Activated CD4-positive, alpha-beta T cell treated with anti-CD3 and anti-CD28 coated beads, Interleukin-2, amount 10 ng/mL, durations not matched to agents 24 days and 14 days (primary cell): ENCODE measurements at regions of chr4 and their contacts with region 1.

Region 1: GRCh38 chr4:115234405-115235093 is 121.1 kb upstream of the NDST4 start:
- DNase-seq: peak; percentile 61
- H3K4me3 Mint-ChIP-seq: no peak overlapping the region
- H3K27ac Mint-ChIP-seq: no peak overlapping the region
- H3K4me1 Mint-ChIP-seq: no peaks in the 10 kb centered on the region
- H3K27me3 Mint-ChIP-seq: no peaks in the 10 kb centered on the region

Region 2: GRCh38 chr4:115537387-115537786 is 302.8 kb after region 1 on chr4:
- intact Hi-C with region 1: loop called (anchors 10 kb)
- DNase-seq: no peak
- H3K4me3 Mint-ChIP-seq: no peak overlapping the region
- H3K27ac Mint-ChIP-seq: no peak overlapping the region
- H3K4me1 Mint-ChIP-seq: no peaks in the 10 kb centered on the region
- H3K27me3 Mint-ChIP-seq: no peaks in the 10 kb centered on the region

Region 3: DNA sequence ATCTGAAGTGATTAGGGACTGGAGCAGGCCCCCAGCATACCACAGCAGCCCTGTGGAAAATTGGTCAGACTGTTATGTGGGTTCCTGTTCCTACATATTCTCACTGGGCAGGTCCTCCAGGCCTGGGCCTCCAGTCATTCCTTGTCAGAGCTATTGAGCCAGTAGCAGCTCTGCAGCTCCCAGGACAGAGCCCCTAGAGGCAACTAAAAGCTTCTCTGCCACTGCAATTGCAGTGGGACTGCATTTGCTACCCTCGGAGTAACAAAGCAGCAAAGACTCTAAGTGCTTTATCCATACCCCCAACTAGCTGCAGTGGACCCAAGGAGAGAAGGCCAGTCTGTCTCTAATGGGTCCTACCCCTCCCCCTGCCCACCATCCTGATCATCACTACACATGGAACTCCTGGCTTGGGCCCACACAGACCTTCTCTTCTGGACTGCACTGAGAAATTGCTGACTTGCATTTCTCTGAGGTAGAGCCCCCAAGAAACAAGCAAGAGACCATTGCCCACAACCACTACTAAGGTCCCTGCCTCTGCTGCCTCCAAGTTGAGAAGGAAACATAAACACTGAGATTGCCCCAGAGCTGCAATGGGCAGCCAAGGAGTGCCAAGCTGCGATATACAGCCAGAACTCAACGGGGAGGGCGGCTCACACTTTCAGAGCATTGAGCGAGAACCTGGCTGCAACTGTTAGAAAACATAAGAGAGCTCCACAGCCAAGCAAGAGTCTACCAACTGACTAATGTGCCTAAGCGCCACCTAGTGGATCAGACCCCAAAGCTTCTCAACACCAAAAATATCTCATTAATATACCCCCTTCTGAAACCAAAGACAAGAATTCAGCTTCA is 617.6 kb after region 1 on chr4:
- intact Hi-C with region 1: loop called (anchors 5 kb)
- DNase-seq: peak; percentile 68
- H3K4me3 Mint-ChIP-seq: no peak overlapping the region
- H3K27ac Mint-ChIP-seq: no peak overlapping the region
- H3K4me1 Mint-ChIP-seq: no peaks in the 10 kb centered on the region
- H3K27me3 Mint-ChIP-seq: no peaks in the 10 kb centered on the region